Motor neuron (in vitro differentiated cells): ENCODE measurements at regions of chr2 and their contacts with region 1.

Region 1: GRCh38 chr2:52976253-52976949 is 791.2 kb upstream of the CHAC2 start:
- ATAC-seq: peak; percentile 43 to 73 (median 54)
- H3K4me3 ChIP-seq: no peak overlapping the region
- H3K27ac ChIP-seq: no peak overlapping the region
- H3K4me1 ChIP-seq: no peaks in the 10 kb centered on the region

Region 2: GRCh38 chr2:52810460-52810859 is 165.9 kb before region 1 on chr2:
- in situ Hi-C with region 1: loop called in 1 of 9 experiments (anchors 25 kb)
- ATAC-seq: peak in 6 of 8 experiments; percentile 20 to 91 (median 74)
- H3K4me3 ChIP-seq: no peak overlapping the region
- H3K27ac ChIP-seq: no peak overlapping the region
- H3K4me1 ChIP-seq: no peaks in the 10 kb centered on the region